Activated CD4-positive, alpha-beta T cell treated with anti-CD3 and anti-CD28 coated beads for 36 hours (primary cell): ENCODE measurements at regions of chr16 and their contacts with region 1.

Region 1: GRCh38 chr16:15509593-15510535 is 75.5 kb downstream of the BMERB1 start:
- DNase-seq: peak; percentile 49
- ATAC-seq: peak; percentile 49
- H3K4me3 Mint-ChIP-seq: no peak overlapping the region
- H3K27ac Mint-ChIP-seq: peak overlapping the region; percentile 76
- H3K4me1 Mint-ChIP-seq: peaks cover 23% of the 10 kb centered on the region
- H3K27me3 Mint-ChIP-seq: no peaks in the 10 kb centered on the region

Region 2: GRCh38 chr16:15427648-15428239 is 82.1 kb before region 1 on chr16:
- CTCF ChIA-PET with region 1: no interaction called
- POLR2A ChIA-PET with region 1: no interaction called
- intact Hi-C with region 1: loop called in 1 of 2 experiments (anchors 1 kb)
- DNase-seq: peak; percentile 78
- ATAC-seq: peak; percentile 74
- H3K4me3 Mint-ChIP-seq: no peak overlapping the region
- H3K27ac Mint-ChIP-seq: no peak overlapping the region
- H3K4me1 Mint-ChIP-seq: peaks cover 2% of the 10 kb centered on the region
- H3K27me3 Mint-ChIP-seq: peaks cover 3% of the 10 kb centered on the region

Region 3: GRCh38 chr16:15434425-15435215 is 75.2 kb before region 1 on chr16 and contains the start of gene BMERB1:
- CTCF ChIA-PET with region 1: no interaction called
- POLR2A ChIA-PET with region 1: no interaction called
- intact Hi-C with region 1: loop called in 1 of 2 experiments (anchors 1 kb)
- DNase-seq: peak; percentile 79
- ATAC-seq: peak; percentile 92
- H3K4me3 Mint-ChIP-seq: peak within 1 kb of the TSS; percentile 82
- H3K27ac Mint-ChIP-seq: no peak within 1 kb of the TSS
- H3K4me1 Mint-ChIP-seq: peaks cover 11% of the 10 kb centered on the region
- H3K27me3 Mint-ChIP-seq: peaks cover 20% of the 10 kb centered on the region
- total RNA-seq, gene BMERB1: 10.1 to 11.6 TPM

Region 4: DNA sequence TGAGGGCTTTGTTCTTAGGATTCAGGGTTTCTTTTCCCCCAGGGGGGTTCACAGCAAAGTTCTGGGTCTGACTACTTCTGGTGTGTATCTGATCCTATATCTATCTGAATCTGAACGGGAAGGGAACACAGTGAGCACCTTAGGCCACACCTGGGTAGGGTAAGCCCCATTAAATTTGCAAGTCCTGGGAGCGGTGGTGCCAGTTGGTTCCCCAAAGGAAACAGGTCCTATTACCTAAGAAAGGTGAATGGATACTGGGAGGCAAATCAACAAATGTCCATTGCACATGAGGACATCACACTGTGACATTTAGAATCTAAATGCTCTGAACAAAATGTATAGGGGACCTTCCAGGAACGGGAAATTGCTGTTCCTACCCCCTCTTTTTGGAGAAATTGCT is 20.8 kb before region 1 on chr16:
- CTCF ChIA-PET with region 1: no interaction called
- POLR2A ChIA-PET with region 1: interaction called, 3 read pairs
- intact Hi-C with region 1: loop called in 1 of 2 experiments (anchors 1 kb)
- DNase-seq: no peak
- ATAC-seq: peak; percentile 32
- H3K4me3 Mint-ChIP-seq: no peak overlapping the region
- H3K27ac Mint-ChIP-seq: peak overlapping the region; percentile 86
- H3K4me1 Mint-ChIP-seq: peaks cover 34% of the 10 kb centered on the region
- H3K27me3 Mint-ChIP-seq: no peaks in the 10 kb centered on the region

Region 5: GRCh38 chr16:15553313-15554088 is 43.6 kb after region 1 on chr16:
- CTCF ChIA-PET with region 1: no interaction called
- POLR2A ChIA-PET with region 1: interaction called, 4 read pairs
- intact Hi-C with region 1: loop called in 1 of 2 experiments (anchors 1 kb)
- DNase-seq: peak; percentile 72
- ATAC-seq: peak; percentile 81
- H3K4me3 Mint-ChIP-seq: no peak overlapping the region
- H3K27ac Mint-ChIP-seq: peak overlapping the region; percentile 5
- H3K4me1 Mint-ChIP-seq: peaks cover 28% of the 10 kb centered on the region
- H3K27me3 Mint-ChIP-seq: no peaks in the 10 kb centered on the region